ENCODE measurements at regions of chr19 and their contacts with region 1.

Region 1: GRCh38 chr19:55178781-55179599 is 1.1 kb downstream of the SYT5 start:
- DNase-seq: peak; percentile 90
- H3K4me3 Mint-ChIP-seq: peak overlapping the region; percentile 65
- H3K27ac Mint-ChIP-seq: peak overlapping the region; percentile 92
- H3K4me1 Mint-ChIP-seq: peaks cover 22% of the 10 kb centered on the region
- H3K27me3 Mint-ChIP-seq: peaks cover 56% of the 10 kb centered on the region
- CTCF ChIP-seq: no peak

Region 2: GRCh38 chr19:55216461-55217198 is 37.6 kb after region 1 on chr19:
- CTCF ChIA-PET with region 1: interaction called, 4 read pairs
- intact Hi-C with region 1: loop called (anchors 5 kb)
- DNase-seq: peak; percentile 96
- H3K4me3 Mint-ChIP-seq: peak overlapping the region; percentile 76
- H3K27ac Mint-ChIP-seq: peak overlapping the region; percentile 95
- H3K4me1 Mint-ChIP-seq: peaks cover 26% of the 10 kb centered on the region
- H3K27me3 Mint-ChIP-seq: no peaks in the 10 kb centered on the region
- CTCF ChIP-seq: no peak

Measured in Calu3 (cell line).